ENCODE measurements at regions of chr10 and their contacts with region 1.

Region 1: GRCh38 chr10:127715782-127716378 is 21.1 kb upstream of the FOXI2 start:
- ATAC-seq: peak in 1 of 8 experiments; percentile 24
- H3K4me3 ChIP-seq: no peak overlapping the region
- H3K27ac ChIP-seq: no peak overlapping the region
- H3K4me1 ChIP-seq: no peaks in the 10 kb centered on the region

Region 2: GRCh38 chr10:127853868-127854768 is 138.2 kb after region 1 on chr10:
- in situ Hi-C with region 1: loop called in 1 of 9 experiments (anchors 10 kb)
- ATAC-seq: peak; percentile 89 to 99 (median 96)
- H3K4me3 ChIP-seq: no peak overlapping the region
- H3K27ac ChIP-seq: no peak overlapping the region
- H3K4me1 ChIP-seq: peaks cover 3 to 5% of the 10 kb centered on the region in 2 donors

Region 3: GRCh38 chr10:128043259-128044045 is 327.6 kb after region 1 on chr10:
- in situ Hi-C with region 1: no loop called
- ATAC-seq: no peak
- H3K4me3 ChIP-seq: no peak overlapping the region
- H3K27ac ChIP-seq: no peak overlapping the region
- H3K4me1 ChIP-seq: no peaks in the 10 kb centered on the region

Region 4: DNA sequence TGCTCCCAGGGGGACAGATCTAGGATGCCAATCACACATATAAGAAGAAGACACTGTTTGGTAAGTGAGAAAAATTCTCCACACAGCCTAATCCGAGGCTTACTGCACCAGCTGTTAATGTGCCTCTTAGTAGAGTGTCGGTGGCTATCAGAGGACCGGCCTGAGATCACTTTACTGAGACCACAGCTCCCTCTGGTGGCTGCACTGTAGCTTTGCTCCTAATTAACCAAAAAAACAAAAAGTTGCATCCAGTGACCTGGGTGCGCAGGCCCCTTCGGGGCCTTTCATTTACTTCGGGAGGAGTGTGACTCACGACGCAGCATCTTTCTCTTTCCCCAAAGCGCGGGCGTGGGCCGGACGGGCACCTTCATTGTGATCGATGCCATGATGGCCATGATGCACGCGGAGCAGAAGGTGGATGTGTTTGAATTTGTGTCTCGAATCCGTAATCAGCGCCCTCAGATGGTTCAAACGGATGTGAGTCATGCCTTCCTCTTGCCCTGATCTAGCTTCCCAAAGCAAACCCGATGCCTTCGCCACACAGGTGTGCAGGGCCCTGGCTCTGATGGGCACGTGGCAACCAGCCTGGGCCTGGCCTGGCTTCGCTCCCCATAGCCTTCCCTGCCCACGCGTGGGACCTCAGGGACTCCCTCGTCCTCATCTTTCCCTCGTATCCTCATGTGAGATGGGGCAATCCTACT is 353.6 kb after region 1 on chr10:
- in situ Hi-C with region 1: loop called in 3 of 9 experiments (anchors 25 kb)
- ATAC-seq: peak; percentile 42 to 90 (median 80)
- H3K4me3 ChIP-seq: no peak overlapping the region
- H3K27ac ChIP-seq: no peak overlapping the region
- H3K4me1 ChIP-seq: no peaks in the 10 kb centered on the region

Measured in motor neuron (in vitro differentiated cells).